Endothelial cell of umbilical vein (primary cell): ENCODE measurements at regions of chr12 and their contacts with region 1.

Region 1: DNA sequence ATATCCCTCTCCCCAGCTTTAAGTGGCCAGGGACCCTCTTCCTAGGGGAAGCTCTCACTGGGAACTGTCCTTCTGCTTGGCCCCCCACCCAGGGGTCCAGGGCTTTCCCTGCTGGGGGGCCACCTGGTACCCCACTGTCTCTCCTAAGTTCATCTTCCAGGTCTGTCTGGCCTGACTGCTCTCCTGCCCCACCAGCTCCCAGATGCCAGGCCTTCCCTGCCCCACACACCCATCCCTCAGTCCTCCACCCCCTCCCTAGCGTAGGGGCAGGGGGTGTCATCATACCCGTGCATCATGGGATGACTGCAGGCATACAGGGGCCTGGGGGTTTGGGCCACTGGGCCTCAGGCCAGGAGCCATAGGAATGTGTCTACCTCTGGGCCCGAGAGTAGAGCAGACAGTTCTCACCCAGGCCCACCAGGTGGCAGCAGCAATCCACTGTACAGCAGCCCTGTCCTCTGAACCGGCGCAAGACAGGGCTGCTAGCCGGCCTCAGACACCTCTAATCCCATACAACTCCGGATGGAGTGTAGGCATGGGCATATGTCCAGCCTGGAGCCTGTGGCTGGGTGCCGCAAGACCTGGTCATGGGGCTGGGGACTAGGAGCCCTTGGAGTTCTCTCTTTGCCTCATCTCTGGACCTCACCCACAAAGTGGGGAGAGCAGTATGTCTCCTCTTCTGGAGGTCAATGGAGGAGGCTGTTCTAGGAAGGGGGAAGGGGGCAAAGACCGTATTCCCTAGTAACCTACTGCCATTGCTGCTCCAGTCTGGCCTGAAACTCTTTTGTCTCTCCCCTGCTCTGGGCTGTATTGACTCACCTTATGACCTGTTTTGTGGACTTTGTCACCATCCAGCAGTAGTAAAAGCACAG is 10.0 kb upstream of the SMARCD1 start:
- DNase-seq: peak; percentile 82
- H3K4me3 ChIP-seq: no peak overlapping the region
- H3K27ac ChIP-seq: no peak overlapping the region
- H3K4me1 ChIP-seq: peaks cover 4% of the 10 kb centered on the region
- H3K27me3 ChIP-seq: no peaks in the 10 kb centered on the region
- CTCF ChIP-seq: peak; percentile 78 to 91
- POLR2A ChIP-seq: no peak

Region 2: GRCh38 chr12:49776413-49776812 is 298.8 kb before region 1 on chr12:
- CTCF ChIA-PET with region 1: interaction called, 7 read pairs
- POLR2A ChIA-PET with region 1: no interaction called
- dilution Hi-C with region 1: no loop called
- intact Hi-C with region 1: loop called (anchors 5 kb)
- DNase-seq: peak; percentile 68
- H3K4me3 ChIP-seq: no peak overlapping the region
- H3K27ac ChIP-seq: no peak overlapping the region
- H3K4me1 ChIP-seq: no peaks in the 10 kb centered on the region
- H3K27me3 ChIP-seq: peaks cover 0 to 2% of the 10 kb centered on the region in 2 experiments
- CTCF ChIP-seq: peak; percentile 77 to 79
- POLR2A ChIP-seq: no peak

Region 3: GRCh38 chr12:49945394-49946080 is 129.6 kb before region 1 on chr12:
- CTCF ChIA-PET with region 1: interaction called, 35 read pairs
- POLR2A ChIA-PET with region 1: no interaction called
- dilution Hi-C with region 1: loop called (anchors 25 kb)
- intact Hi-C with region 1: no loop called
- DNase-seq: peak; percentile 89
- H3K4me3 ChIP-seq: no peak overlapping the region
- H3K27ac ChIP-seq: peak overlapping the region; percentile 49
- H3K4me1 ChIP-seq: peaks cover 11% of the 10 kb centered on the region
- H3K27me3 ChIP-seq: no peaks in the 10 kb centered on the region
- CTCF ChIP-seq: peak; percentile 96 to 97
- POLR2A ChIP-seq: no peak

Region 4: GRCh38 chr12:49983892-49984291 is 91.3 kb before region 1 on chr12:
- CTCF ChIA-PET with region 1: interaction called, 22 read pairs
- POLR2A ChIA-PET with region 1: no interaction called
- dilution Hi-C with region 1: no loop called
- intact Hi-C with region 1: no loop called
- DNase-seq: peak; percentile 87
- H3K4me3 ChIP-seq: no peak overlapping the region
- H3K27ac ChIP-seq: peak overlapping the region; percentile 24
- H3K4me1 ChIP-seq: peaks cover 14% of the 10 kb centered on the region
- H3K27me3 ChIP-seq: no peaks in the 10 kb centered on the region
- CTCF ChIP-seq: no peak
- POLR2A ChIP-seq: no peak

Region 5: GRCh38 chr12:50038336-50038735 is 36.8 kb before region 1 on chr12:
- CTCF ChIA-PET with region 1: interaction called, 133 read pairs
- POLR2A ChIA-PET with region 1: no interaction called
- dilution Hi-C with region 1: no loop called
- intact Hi-C with region 1: loop called (anchors 1 kb)
- DNase-seq: no peak
- H3K4me3 ChIP-seq: no peak overlapping the region
- H3K27ac ChIP-seq: no peak overlapping the region
- H3K4me1 ChIP-seq: no peaks in the 10 kb centered on the region
- H3K27me3 ChIP-seq: peaks cover 2 to 6% of the 10 kb centered on the region in 2 experiments
- CTCF ChIP-seq: no peak
- POLR2A ChIP-seq: no peak

Region 6: DNA sequence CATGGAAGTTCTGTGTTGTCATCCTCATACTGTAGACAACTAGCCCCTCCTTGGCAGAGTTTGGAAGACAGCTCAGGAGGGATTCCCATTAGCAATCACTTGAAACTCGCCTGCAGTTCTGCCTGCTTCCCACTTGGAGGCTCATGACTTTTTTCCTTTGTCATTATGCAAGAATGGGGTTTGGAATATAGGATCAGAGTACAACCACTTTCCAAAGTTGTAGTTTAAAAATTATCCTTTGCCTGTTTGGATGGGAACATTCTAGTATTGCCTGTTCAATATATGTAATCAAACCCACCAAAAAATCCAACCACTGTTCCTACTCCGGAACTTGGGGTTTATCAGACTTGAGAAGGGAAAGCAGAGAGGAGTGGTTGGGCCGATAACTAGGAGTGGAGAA is 26.5 kb after region 1 on chr12:
- CTCF ChIA-PET with region 1: no interaction called
- POLR2A ChIA-PET with region 1: no interaction called
- dilution Hi-C with region 1: no loop called
- intact Hi-C with region 1: no loop called
- DNase-seq: peak; percentile 22
- H3K4me3 ChIP-seq: no peak overlapping the region
- H3K27ac ChIP-seq: no peak overlapping the region
- H3K4me1 ChIP-seq: no peaks in the 10 kb centered on the region
- H3K27me3 ChIP-seq: no peaks in the 10 kb centered on the region
- CTCF ChIP-seq: peak; percentile 19 to 45
- POLR2A ChIP-seq: no peak

Region 7: DNA sequence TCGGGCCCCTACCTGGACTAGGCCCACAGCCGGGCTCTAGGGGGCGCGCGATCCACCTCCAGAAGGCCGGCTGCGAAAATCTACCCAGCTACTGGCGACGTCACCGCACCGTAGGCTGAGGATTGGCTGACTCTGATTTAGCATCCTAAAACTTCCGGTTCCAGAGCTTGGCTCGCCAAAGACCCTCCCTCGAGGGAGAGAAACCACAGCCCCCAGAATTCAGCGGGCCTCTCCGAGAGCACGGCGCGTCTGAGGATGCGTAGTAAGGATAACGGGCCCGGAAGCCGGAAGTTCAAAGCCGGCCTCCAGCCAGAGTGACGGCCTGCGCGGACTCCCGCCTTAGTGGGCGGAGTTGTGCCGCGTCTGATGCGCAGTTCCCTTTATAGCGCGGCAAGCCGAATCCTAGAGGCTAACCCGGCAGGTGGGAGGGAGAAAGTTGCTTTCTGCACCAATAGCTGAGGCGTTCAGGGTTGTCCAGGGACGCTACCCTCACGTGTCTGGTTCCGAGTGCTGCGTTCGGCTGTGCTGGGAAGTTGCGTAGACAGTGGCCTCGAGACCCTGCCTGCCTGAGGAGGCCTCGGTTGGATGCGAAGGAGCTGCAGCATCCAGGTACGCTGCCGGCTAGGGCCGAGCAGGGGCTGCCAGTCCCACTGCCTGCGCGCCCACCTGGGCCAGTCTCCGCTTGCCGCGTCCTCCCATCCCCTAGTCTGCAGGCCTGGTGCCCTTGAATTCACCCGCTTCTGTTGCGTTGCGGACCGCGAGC is 36.7 kb after region 1 on chr12 and contains the start of gene COX14:
- CTCF ChIA-PET with region 1: interaction called, 12 read pairs
- POLR2A ChIA-PET with region 1: no interaction called
- dilution Hi-C with region 1: no loop called
- intact Hi-C with region 1: loop called (anchors 1 kb)
- DNase-seq: peak; percentile 100
- H3K4me3 ChIP-seq: peak within 1 kb of the TSS; percentile 0 to 76 (median 59)
- H3K27ac ChIP-seq: peak within 1 kb of the TSS; percentile 6
- H3K4me1 ChIP-seq: peaks cover 9% of the 10 kb centered on the region
- H3K27me3 ChIP-seq: no peaks in the 10 kb centered on the region
- CTCF ChIP-seq: peak; percentile 98 to 99
- POLR2A ChIP-seq: peak; percentile 92
- total RNA-seq, gene COX14: 40.0 and 40.3 TPM in 2 replicates

Region 8: DNA sequence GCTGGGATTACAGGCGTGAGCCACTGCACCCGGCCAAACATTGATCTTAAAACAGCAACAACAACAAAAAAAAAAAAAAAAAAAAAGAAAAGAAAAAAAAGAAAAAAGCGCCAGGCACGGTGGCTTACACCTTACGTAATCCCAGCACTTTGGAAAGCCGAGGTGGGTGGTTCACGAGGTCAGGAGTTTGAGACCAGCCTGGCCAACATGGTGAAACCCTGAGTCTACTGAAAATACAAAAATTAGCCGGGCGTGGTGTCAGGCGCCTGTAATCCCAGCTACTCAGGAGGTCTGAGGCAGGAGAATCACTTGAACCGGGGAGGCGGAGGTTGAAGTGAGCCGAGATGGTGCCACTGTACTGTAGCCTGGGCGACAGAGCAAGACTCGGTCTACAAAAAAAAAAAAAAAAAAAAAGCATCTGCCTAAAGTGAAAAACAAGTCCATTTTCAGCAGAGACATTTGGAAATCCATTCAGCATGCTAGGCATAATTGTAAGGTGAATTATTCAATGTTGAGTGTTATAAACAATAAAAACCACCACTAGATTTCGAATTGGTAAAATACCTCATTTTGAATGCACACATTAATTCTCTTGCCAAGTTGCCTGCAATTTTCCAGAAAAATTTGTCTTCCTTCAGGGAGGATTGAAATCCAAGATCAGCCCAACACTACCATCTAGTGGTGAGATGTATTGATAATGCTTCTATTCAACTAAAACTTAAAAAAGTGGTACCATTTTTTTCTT is 100.0 kb after region 1 on chr12:
- CTCF ChIA-PET with region 1: interaction called, 87 read pairs
- POLR2A ChIA-PET with region 1: no interaction called
- dilution Hi-C with region 1: no loop called
- intact Hi-C with region 1: loop called (anchors 1 kb)
- DNase-seq: peak; percentile 87
- H3K4me3 ChIP-seq: no peak overlapping the region
- H3K27ac ChIP-seq: no peak overlapping the region
- H3K4me1 ChIP-seq: no peaks in the 10 kb centered on the region
- H3K27me3 ChIP-seq: no peaks in the 10 kb centered on the region
- CTCF ChIP-seq: peak; percentile 27 to 38
- POLR2A ChIP-seq: no peak